Activated T-helper 2 cell treated with anti-CD3 and anti-CD28 coated beads, Interferon-gamma antibody, Interleukin-2, Interleukin-4, amounts not matched to agents 10 μg/mL and 5 μg/mL and 100 μg/mL, durations not matched to agents 14 hours and 24 hours and 36 hours (primary cell): ENCODE measurements at regions of chr17 and their contacts with region 1.

Region 1: GRCh38 chr17:8041249-8041928 is 2.5 kb downstream of the ALOX15B start:
- DNase-seq: peak; percentile 22
- H3K4me3 Mint-ChIP-seq: no peak overlapping the region
- H3K27ac Mint-ChIP-seq: no peak overlapping the region
- H3K4me1 Mint-ChIP-seq: peaks cover 3% of the 10 kb centered on the region
- H3K27me3 Mint-ChIP-seq: peaks cover 27% of the 10 kb centered on the region

Region 2: GRCh38 chr17:8016632-8017478 is 24.5 kb before region 1 on chr17:
- intact Hi-C with region 1: loop called (anchors 1 kb)
- DNase-seq: peak; percentile 48
- H3K4me3 Mint-ChIP-seq: peak overlapping the region; percentile 75
- H3K27ac Mint-ChIP-seq: no peak overlapping the region
- H3K4me1 Mint-ChIP-seq: peaks cover 10% of the 10 kb centered on the region
- H3K27me3 Mint-ChIP-seq: peaks cover 19% of the 10 kb centered on the region